HCT116 (cell line): ENCODE measurements at regions of chr6 and their contacts with region 1.

Region 1: DNA sequence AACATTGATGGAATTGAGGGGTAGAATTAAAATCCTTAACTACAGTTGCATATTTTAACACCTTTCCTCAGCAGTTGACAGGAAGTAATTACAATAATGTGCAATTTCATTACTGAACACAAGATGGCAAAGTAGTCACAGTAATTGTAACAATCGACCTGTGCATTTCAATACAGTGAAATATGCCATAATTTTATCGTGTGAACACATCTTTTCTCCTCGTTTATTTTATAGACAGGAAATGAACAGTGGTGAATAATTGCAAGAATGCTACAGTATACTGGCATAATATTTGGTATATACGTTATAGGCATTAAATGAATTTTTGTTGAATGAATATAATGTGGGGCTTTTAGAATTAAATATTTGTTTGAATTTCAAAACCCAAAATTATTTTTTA is 25.0 kb downstream of the CYB5R4 start:
- DNase-seq: peak; percentile 42
- ATAC-seq: peak; percentile 76
- H3K4me3 ChIP-seq: no peak overlapping the region
- H3K27ac ChIP-seq: no peak overlapping the region
- H3K4me1 ChIP-seq: no peaks in the 10 kb centered on the region
- H3K27me3 ChIP-seq: no peaks in the 10 kb centered on the region
- CTCF ChIP-seq: peak; percentile 46 to 79 (median 72); a peak in 5 of 6 replicates
- POLR2A ChIP-seq: no peak
- RAD21 ChIP-seq: peak; percentile 89

Region 2: DNA sequence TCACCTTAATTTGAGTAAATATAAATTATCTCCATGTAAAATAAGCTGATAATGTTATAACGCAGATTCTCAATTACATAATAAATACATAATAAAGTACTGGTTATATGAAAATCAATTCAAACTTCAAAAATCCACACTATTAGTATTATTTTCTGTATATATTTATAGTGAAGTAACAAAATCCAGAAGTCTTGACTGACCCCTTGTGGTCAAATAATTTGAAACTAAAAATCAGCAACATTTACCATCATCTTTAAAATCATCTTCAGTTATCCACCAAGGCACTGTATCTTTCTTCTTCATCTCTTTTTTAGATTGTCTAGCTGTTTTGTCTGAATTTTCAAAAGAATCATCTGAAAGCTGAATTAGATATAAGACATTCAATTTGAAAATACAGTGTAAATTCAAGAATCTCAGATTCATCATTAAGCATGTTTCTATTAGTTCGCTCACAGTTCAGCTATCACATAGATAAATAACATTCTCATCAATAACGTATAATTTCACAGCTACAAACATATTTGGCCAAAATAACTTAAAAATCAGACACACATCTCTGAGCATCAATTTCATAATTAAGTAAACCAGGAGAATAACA is 336.4 kb after region 1 on chr6:
- CTCF ChIA-PET with region 1: interaction called, 5 read pairs
- POLR2A ChIA-PET with region 1: no interaction called
- RAD21 ChIA-PET with region 1: interaction called in 1 of 2 experiments, 3 read pairs
- intact Hi-C with region 1: loop called (anchors 1 kb)
- DNase-seq: peak; percentile 10
- ATAC-seq: no peak
- H3K4me3 ChIP-seq: no peak overlapping the region
- H3K27ac ChIP-seq: no peak overlapping the region
- H3K4me1 ChIP-seq: no peaks in the 10 kb centered on the region
- H3K27me3 ChIP-seq: no peaks in the 10 kb centered on the region
- CTCF ChIP-seq: peak; percentile 22 to 60 (median 59); a peak in 4 of 6 replicates
- POLR2A ChIP-seq: no peak
- RAD21 ChIP-seq: peak; percentile 73

Region 3: GRCh38 chr6:84635081-84635761 is 750.7 kb after region 1 on chr6:
- CTCF ChIA-PET with region 1: no interaction called
- POLR2A ChIA-PET with region 1: no interaction called
- RAD21 ChIA-PET with region 1: no interaction called
- intact Hi-C with region 1: no loop called
- DNase-seq: no peak
- ATAC-seq: no peak
- H3K4me3 ChIP-seq: no peak overlapping the region
- H3K27ac ChIP-seq: no peak overlapping the region
- H3K4me1 ChIP-seq: no peaks in the 10 kb centered on the region
- H3K27me3 ChIP-seq: no peaks in the 10 kb centered on the region
- CTCF ChIP-seq: no peak
- POLR2A ChIP-seq: no peak
- RAD21 ChIP-seq: no peak